ENCODE measurements at regions of chr19 and their contacts with region 1.

Region 1: GRCh38 chr19:4115050-4115817 is 8.7 kb downstream of the MAP2K2 start:
- DNase-seq: peak; percentile 48 to 58
- ATAC-seq: peak; percentile 64 to 86 (median 80)
- H3K4me3 ChIP-seq: peak overlapping the region in 2 of 10 donors; percentile 7 to 23
- H3K27ac ChIP-seq: peak overlapping the region in 9 of 10 donors; percentile 29 to 75 (median 58)
- H3K4me1 ChIP-seq: peaks cover 6 to 40% (median 26%) of the 10 kb centered on the region in 9 donors
- H3K27me3 ChIP-seq: no peaks in the 10 kb centered on the region
- CTCF ChIP-seq: peak in 4 of 9 donors; percentile 11 to 31 (median 22)

Region 2: DNA sequence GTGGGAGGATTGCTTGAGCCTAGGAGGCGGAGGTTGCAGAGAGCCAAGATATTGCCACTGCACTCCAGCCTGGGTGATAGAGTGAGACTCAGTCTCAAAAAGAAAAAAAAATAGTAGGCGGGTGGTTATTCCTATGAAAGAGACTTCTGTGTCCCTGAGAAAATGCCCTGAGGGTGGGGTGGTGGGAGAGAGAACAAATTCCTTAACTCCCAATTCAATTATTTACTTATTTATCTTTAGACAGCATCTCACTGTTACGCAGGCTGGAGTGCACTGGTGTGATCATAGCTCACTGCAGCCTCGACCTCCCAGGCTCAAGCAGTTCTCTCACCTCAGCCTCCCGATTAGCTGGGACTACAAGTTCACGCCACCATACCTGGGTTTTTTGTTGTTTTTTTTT is 119.6 kb before region 1 on chr19:
- intact Hi-C with region 1: loop called in 1 of 10 experiments (anchors 10 kb)
- DNase-seq: no peak
- ATAC-seq: no peak
- H3K4me3 ChIP-seq: no peak overlapping the region
- H3K27ac ChIP-seq: no peak overlapping the region
- H3K4me1 ChIP-seq: no peaks in the 10 kb centered on the region
- H3K27me3 ChIP-seq: no peaks in the 10 kb centered on the region
- CTCF ChIP-seq: no peak

Region 3: DNA sequence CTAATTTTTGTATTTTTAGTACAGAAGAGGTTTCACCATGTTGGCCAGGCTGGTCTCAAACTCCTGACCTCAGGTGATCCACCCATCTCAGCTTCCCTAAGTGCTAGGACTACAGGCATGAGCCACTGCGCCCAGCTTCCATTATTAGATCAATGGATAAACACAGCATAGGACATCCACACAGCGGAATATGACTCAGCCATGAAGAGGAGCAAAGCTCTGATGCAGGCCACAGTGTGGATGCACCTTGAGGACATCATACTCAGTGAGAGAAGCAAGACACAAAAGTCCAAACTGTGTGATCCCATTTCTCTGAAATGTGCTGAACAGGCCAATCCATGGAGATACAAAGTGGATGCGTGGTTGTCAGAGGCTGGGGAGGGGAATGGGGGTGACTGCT is 43.6 kb before region 1 on chr19:
- intact Hi-C with region 1: loop called in 3 of 10 experiments (anchors 5 kb)
- DNase-seq: no peak
- ATAC-seq: no peak
- H3K4me3 ChIP-seq: no peak overlapping the region
- H3K27ac ChIP-seq: no peak overlapping the region
- H3K4me1 ChIP-seq: peaks cover 4 to 35% (median 14%) of the 10 kb centered on the region in 9 donors
- H3K27me3 ChIP-seq: no peaks in the 10 kb centered on the region
- CTCF ChIP-seq: no peak

Region 4: GRCh38 chr19:4077882-4078614 is 37.2 kb before region 1 on chr19:
- intact Hi-C with region 1: loop called in 3 of 10 experiments (anchors 5 kb)
- DNase-seq: peak; percentile 84 to 88
- ATAC-seq: peak; percentile 71 to 94 (median 90)
- H3K4me3 ChIP-seq: peak overlapping the region; percentile 18 to 65 (median 59)
- H3K27ac ChIP-seq: peak overlapping the region; percentile 73 to 95 (median 90)
- H3K4me1 ChIP-seq: peaks cover 9 to 34% (median 18%) of the 10 kb centered on the region in 9 donors
- H3K27me3 ChIP-seq: no peaks in the 10 kb centered on the region
- CTCF ChIP-seq: no peak